ENCODE measurements at regions of chr4 and their contacts with region 1.

Region 1: DNA sequence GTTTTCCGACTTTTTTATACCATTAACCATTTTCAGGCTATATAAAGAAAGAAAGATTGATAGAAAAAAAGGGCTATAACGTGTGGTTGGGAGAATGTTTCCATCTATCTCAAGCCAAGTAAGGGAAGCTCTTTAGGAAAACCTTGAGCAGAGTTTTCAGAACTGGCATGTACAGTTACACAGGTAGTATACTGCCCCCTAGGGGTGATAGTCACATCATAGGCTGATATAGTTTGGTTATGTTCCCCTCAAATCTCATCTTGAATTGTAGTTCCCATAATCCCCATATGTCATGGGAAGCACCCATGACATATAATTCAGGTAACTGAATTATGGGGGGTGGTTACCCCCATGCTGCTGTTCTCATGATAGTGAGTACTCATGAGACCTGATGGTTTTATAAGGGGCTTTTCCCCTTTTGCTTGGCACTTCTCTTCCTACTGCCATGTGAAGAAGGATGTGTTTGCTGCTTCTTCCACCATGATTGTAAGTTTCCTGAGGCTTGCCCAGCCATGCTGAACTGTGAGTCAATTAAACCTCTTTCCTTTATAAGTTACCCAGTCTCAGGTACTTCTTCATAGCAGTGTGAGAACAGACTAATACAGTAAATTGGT is 186.8 kb downstream of the TMA16 start:
- DNase-seq: peak; percentile 24
- ATAC-seq: peak; percentile 45
- H3K4me3 Mint-ChIP-seq: no peak overlapping the region
- H3K27ac Mint-ChIP-seq: no peak overlapping the region
- H3K4me1 Mint-ChIP-seq: no peaks in the 10 kb centered on the region
- H3K27me3 Mint-ChIP-seq: peaks cover 3% of the 10 kb centered on the region
- CTCF ChIP-seq: peak; percentile 75

Region 2: GRCh38 chr4:163484906-163485305 is 196.4 kb before region 1 on chr4:
- CTCF ChIA-PET with region 1: interaction called, 3 read pairs
- POLR2A ChIA-PET with region 1: no interaction called
- intact Hi-C with region 1: loop called (anchors 5 kb)
- DNase-seq: peak; percentile 77
- ATAC-seq: peak; percentile 71
- H3K4me3 Mint-ChIP-seq: no peak overlapping the region
- H3K27ac Mint-ChIP-seq: no peak overlapping the region
- H3K4me1 Mint-ChIP-seq: no peaks in the 10 kb centered on the region
- H3K27me3 Mint-ChIP-seq: peaks cover 7% of the 10 kb centered on the region
- CTCF ChIP-seq: peak; percentile 74

Measured in activated CD8-positive, alpha-beta T cell treated with anti-CD3 and anti-CD28 coated beads for 36 hours (primary cell).